ENCODE measurements at regions of chr14 and their contacts with region 1.

Region 1: GRCh38 chr14:50647282-50647681 is 20.8 kb downstream of the SAV1 start:
- DNase-seq: peak; percentile 56
- ATAC-seq: peak; percentile 95
- H3K4me3 ChIP-seq: peak overlapping the region in 3 of 5 experiments; percentile 22 to 50 (median 25)
- H3K4me3 Mint-ChIP-seq: peak overlapping the region; percentile 64
- H3K27ac ChIP-seq: peak overlapping the region; percentile 11 to 70
- H3K27ac Mint-ChIP-seq: peak overlapping the region; percentile 39
- H3K4me1 ChIP-seq: peaks cover 33 to 43% of the 10 kb centered on the region in 2 donors
- H3K4me1 Mint-ChIP-seq: peaks cover 50% of the 10 kb centered on the region
- H3K27me3 ChIP-seq: no peaks in the 10 kb centered on the region
- H3K27me3 Mint-ChIP-seq: no peaks in the 10 kb centered on the region
- CTCF ChIP-seq: no peak

Region 2: GRCh38 chr14:50573858-50574257 is 73.4 kb before region 1 on chr14:
- CTCF ChIA-PET with region 1: no interaction called
- POLR2A ChIA-PET with region 1: no interaction called
- intact Hi-C with region 1: no loop called
- DNase-seq: no peak
- ATAC-seq: no peak
- H3K4me3 ChIP-seq: no peak overlapping the region
- H3K4me3 Mint-ChIP-seq: no peak overlapping the region
- H3K27ac ChIP-seq: no peak overlapping the region
- H3K27ac Mint-ChIP-seq: no peak overlapping the region
- H3K4me1 ChIP-seq: no peaks in the 10 kb centered on the region
- H3K4me1 Mint-ChIP-seq: no peaks in the 10 kb centered on the region
- H3K27me3 ChIP-seq: no peaks in the 10 kb centered on the region
- H3K27me3 Mint-ChIP-seq: peaks cover 6% of the 10 kb centered on the region
- CTCF ChIP-seq: no peak

Region 3: DNA sequence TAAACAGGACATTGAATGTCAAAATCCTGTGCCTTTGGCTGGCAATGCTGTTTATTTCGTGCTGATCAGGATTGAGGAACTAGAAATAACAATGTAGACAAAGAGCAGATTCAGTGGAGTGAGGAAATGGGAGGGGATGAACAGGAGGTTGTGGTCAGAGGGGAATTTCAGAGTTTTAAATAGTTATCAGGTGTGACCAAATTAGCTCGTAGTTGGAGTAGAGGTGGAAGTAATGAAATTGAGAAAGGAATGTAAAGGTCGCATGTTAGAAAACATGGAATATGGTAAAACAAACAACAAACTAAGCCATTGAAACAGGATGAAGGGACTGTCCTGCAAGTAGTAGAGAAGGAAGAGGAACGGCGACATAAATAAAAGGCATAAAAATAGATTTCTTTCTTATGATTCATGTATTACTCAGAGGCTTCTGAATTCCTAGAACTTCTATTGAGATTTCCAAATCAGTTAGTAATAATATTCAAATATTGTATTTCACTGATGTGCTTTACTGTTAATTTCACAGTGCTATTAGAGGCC is 30.3 kb after region 1 on chr14:
- CTCF ChIA-PET with region 1: no interaction called
- POLR2A ChIA-PET with region 1: no interaction called
- intact Hi-C with region 1: loop called (anchors 5 kb)
- DNase-seq: peak; percentile 77
- ATAC-seq: peak; percentile 77
- H3K4me3 ChIP-seq: peak overlapping the region in 4 of 5 experiments; percentile 7 to 46 (median 23)
- H3K4me3 Mint-ChIP-seq: peak overlapping the region; percentile 69
- H3K27ac ChIP-seq: peak overlapping the region; percentile 80 to 86
- H3K27ac Mint-ChIP-seq: peak overlapping the region; percentile 73
- H3K4me1 ChIP-seq: peaks cover 24 to 26% of the 10 kb centered on the region in 2 donors
- H3K4me1 Mint-ChIP-seq: peaks cover 31% of the 10 kb centered on the region
- H3K27me3 ChIP-seq: no peaks in the 10 kb centered on the region
- H3K27me3 Mint-ChIP-seq: no peaks in the 10 kb centered on the region
- CTCF ChIP-seq: no peak

Region 4: GRCh38 chr14:51157012-51157411 is 509.7 kb after region 1 on chr14:
- CTCF ChIA-PET with region 1: no interaction called
- POLR2A ChIA-PET with region 1: no interaction called
- intact Hi-C with region 1: no loop called
- DNase-seq: peak; percentile 24
- ATAC-seq: no peak
- H3K4me3 ChIP-seq: no peak overlapping the region
- H3K4me3 Mint-ChIP-seq: no peak overlapping the region
- H3K27ac ChIP-seq: no peak overlapping the region
- H3K27ac Mint-ChIP-seq: no peak overlapping the region
- H3K4me1 ChIP-seq: peaks cover 6 to 7% of the 10 kb centered on the region in 2 donors
- H3K4me1 Mint-ChIP-seq: peaks cover 13% of the 10 kb centered on the region
- H3K27me3 ChIP-seq: no peaks in the 10 kb centered on the region
- H3K27me3 Mint-ChIP-seq: no peaks in the 10 kb centered on the region
- CTCF ChIP-seq: peak; percentile 43

Region 5: GRCh38 chr14:51674294-51675002 is 1027.2 kb after region 1 on chr14:
- CTCF ChIA-PET with region 1: no interaction called
- POLR2A ChIA-PET with region 1: no interaction called
- intact Hi-C with region 1: no loop called
- DNase-seq: no peak
- ATAC-seq: no peak
- H3K4me3 ChIP-seq: no peak overlapping the region
- H3K4me3 Mint-ChIP-seq: no peak overlapping the region
- H3K27ac ChIP-seq: no peak overlapping the region
- H3K27ac Mint-ChIP-seq: no peak overlapping the region
- H3K4me1 ChIP-seq: no peaks in the 10 kb centered on the region
- H3K4me1 Mint-ChIP-seq: no peaks in the 10 kb centered on the region
- H3K27me3 ChIP-seq: no peaks in the 10 kb centered on the region
- H3K27me3 Mint-ChIP-seq: peaks cover 27% of the 10 kb centered on the region
- CTCF ChIP-seq: no peak

Measured in B cell (primary cell).